ENCODE measurements at regions of chr3 and their contacts with region 1.

Region 1: DNA sequence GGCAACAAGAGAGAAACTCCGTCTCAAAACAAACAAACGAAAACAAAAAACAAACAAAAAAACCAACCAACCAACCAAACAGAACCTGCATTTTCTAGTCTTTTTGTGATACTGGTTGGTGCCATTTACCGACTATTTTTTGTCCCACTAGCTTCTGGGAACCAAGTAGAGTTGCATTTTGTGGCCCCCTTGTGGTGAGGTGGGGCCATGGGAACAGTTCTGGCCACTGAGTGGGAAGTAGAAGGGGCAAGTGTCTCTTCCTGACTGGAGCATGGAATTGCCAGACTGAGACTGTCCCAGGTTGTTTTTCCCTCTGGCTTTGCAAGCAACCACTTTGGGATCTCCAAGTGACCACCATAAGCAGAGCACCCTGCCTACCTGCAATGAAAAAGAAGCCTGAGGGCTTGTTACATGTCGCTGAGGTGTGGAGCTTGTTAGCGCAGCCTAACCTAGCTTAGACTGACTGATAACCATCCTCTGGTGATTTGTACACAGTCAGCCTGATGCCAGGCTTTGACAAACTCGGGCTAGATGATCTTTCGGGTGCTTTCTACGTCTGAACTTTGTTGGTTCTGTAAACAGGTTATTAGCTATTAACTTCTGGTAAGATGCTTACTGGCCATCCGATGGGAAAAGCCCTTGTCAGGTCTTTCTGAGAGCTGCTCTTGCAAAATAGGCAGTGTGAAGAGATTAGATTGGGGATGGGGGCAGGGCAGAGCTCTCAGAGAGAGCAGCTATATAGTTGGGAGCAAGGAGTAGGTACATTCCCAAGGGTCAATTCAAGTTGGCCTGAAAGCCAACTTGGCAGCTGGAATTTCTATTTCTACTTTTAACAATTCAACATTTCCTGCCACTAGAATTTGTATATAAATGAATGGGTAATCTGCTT is 172.2 kb downstream of the SSR3 start:
- DNase-seq: peak; percentile 68
- H3K4me3 Mint-ChIP-seq: no peak overlapping the region
- H3K27ac Mint-ChIP-seq: no peak overlapping the region
- H3K4me1 Mint-ChIP-seq: no peaks in the 10 kb centered on the region
- H3K27me3 Mint-ChIP-seq: peaks cover 19% of the 10 kb centered on the region

Region 2: GRCh38 chr3:156017352-156018030 is 365.2 kb before region 1 on chr3:
- intact Hi-C with region 1: loop called (anchors 10 kb)
- DNase-seq: no peak
- H3K4me3 Mint-ChIP-seq: no peak overlapping the region
- H3K27ac Mint-ChIP-seq: no peak overlapping the region
- H3K4me1 Mint-ChIP-seq: no peaks in the 10 kb centered on the region
- H3K27me3 Mint-ChIP-seq: peaks cover 17% of the 10 kb centered on the region